Mammary epithelial cell (primary cell): ENCODE measurements at regions of chr17 and their contacts with region 1.

Region 1: DNA sequence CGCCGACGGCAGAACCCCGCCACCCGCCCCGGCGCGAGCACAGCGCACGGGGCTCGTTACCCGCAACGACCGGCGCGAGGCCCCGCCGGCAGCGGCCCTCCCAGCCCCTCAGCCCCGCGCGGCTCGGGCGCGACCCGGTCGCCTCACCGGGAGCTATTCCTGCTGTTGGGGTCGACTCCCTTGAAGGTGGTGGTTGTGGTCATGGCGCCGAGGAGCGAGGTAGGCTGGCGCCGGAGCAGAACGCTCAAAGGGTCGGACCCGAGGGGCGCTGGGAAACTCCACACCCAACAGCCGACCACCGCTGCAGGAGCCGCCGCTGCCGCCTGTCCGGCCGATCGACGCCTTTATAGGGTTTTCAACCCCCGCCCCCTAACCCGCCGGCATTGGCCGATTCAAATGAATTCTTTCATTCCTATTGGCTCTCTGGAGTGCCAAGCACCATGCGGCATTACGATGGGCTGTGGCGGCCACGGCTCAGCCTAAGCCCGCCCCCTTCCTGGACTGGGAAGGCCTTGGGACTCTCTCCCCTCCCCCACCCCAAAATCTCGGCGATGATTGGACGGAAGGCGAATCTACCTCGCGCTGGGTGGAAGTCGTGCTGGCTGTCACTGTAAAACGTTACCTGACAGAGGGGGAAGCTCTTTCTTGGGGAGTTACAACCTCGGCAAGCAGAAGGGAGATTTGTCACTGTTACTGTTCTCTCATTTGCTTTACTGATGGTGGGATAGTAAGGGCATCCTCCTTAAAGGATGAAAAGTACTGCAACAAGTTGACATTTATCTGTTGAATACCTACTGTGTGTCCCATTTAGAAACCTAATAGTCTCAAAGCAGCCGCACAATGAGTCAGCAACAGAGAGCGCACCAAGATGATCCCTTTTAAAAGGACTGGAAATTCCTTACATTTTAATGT is at the start of gene JPT1:
- DNase-seq: peak; percentile 99
- H3K4me3 ChIP-seq: peak within 1 kb of the TSS; percentile 92 to 94 (median 93)
- H3K27ac ChIP-seq: peak within 1 kb of the TSS; percentile 61
- H3K4me1 ChIP-seq: peaks cover 29% of the 10 kb centered on the region
- H3K27me3 ChIP-seq: no peaks in the 10 kb centered on the region
- CTCF ChIP-seq: no peak
- total RNA-seq, gene JPT1: 107 to 223 TPM

Region 2: DNA sequence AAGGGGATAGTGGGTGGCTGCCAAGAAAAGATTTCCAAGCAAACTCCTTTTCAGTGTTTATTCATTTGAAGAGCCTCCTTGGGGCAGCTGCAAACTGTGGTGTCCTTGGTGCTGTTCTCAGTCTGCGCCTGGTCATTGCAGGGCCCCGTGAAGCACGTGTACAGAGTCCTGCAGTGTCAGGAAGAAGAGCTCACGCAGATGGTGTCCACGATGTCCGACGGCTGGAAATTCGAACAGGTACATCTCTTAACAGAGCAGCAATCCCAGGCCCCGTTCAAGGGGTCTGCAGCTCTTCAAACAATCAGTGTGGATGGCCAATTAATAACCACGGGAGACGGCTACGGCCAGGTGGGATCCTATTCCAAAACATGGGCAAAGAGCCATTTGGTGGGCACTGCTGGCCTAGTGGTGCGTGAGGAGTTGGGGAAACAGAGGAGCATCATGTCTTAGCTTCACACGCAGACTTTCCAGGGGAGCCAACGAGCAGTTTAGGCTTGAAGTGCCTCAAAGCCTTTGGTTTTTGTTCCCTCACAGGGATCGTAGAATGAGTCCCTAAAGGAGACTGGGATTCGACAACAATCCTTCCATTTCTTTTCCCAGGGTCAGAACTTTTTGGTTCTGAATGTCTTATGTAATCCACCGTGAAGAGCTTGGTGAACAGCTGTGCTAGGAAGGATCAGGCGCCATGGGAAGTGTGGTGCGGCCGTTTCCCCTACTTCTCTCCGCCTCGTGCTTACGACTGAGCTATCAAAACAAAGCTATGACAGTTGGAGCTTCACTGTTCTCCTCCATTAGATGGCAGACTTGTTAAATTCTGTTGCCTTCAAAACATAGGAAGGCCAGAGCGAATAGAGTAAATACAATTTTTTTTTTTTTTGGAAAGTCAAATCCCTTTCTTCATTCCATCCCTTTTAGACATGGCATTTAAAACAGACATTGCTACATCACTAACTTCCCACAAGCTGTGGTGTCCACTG is 94.8 kb before region 1 on chr17:
- CTCF ChIA-PET with region 1: no interaction called
- dilution Hi-C with region 1: no loop called
- in situ Hi-C with region 1: no loop called
- intact Hi-C with region 1: no loop called
- DNase-seq: no peak
- H3K4me3 ChIP-seq: no peak overlapping the region
- H3K27ac ChIP-seq: no peak overlapping the region
- H3K4me1 ChIP-seq: no peaks in the 10 kb centered on the region
- H3K27me3 ChIP-seq: no peaks in the 10 kb centered on the region
- CTCF ChIP-seq: peak; percentile 13 to 31

Region 3: GRCh38 chr17:75124041-75124818 is 30.2 kb before region 1 on chr17:
- CTCF ChIA-PET with region 1: no interaction called
- dilution Hi-C with region 1: no loop called
- in situ Hi-C with region 1: no loop called
- intact Hi-C with region 1: loop called (anchors 2 kb)
- DNase-seq: peak; percentile 98
- H3K4me3 ChIP-seq: no peak overlapping the region
- H3K27ac ChIP-seq: peak overlapping the region; percentile 87
- H3K4me1 ChIP-seq: peaks cover 29% of the 10 kb centered on the region
- H3K27me3 ChIP-seq: no peaks in the 10 kb centered on the region
- CTCF ChIP-seq: peak in 1 of 2 donors; percentile 5

Region 4: DNA sequence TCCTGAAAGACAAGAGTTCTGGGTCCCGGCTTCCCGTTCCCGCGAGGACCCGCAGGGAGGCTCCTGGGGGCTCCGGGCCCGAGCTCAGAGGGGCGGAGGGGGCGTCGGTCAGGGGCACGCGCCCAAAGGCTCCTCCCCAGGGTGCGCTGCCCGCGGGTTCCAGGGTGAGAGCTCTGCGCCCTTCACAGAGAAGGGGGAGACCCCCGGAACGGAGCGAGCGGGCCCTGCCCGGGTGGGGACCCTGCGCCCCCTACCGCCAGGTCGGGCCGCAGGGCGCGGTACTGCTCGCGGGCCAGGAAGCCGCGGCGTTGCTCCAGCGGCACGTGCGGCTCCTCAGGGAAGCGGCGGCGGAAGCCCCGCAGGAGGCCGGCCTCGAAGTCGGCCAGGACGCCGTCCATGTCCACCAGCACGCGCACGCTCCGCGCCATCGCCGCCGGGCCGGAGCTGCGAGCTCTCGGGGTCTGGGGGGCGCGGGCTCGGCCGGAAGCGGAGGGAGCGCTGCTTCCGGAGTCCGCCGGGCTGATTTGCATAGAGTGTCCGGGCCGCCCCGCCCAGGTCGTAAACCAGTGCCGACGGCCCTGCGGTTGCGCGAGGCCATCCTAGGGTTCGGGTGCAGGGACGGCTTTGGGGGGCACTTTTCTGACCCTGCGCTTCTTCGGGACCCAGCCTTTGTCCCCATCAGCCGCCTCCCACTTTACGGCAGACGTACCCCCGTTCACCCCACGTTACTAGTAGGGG is 23.0 kb before region 1 on chr17 and contains the start of gene NT5C:
- CTCF ChIA-PET with region 1: no interaction called
- dilution Hi-C with region 1: no loop called
- in situ Hi-C with region 1: no loop called
- intact Hi-C with region 1: loop called (anchors 2 kb)
- DNase-seq: peak; percentile 69
- H3K4me3 ChIP-seq: peak within 1 kb of the TSS; percentile 72 to 97 (median 87)
- H3K27ac ChIP-seq: peak within 1 kb of the TSS; percentile 67
- H3K4me1 ChIP-seq: peaks cover 25% of the 10 kb centered on the region
- H3K27me3 ChIP-seq: no peaks in the 10 kb centered on the region
- CTCF ChIP-seq: peak; percentile 26 to 69
- total RNA-seq, gene NT5C: 45.7 to 65.7 TPM

Region 5: DNA sequence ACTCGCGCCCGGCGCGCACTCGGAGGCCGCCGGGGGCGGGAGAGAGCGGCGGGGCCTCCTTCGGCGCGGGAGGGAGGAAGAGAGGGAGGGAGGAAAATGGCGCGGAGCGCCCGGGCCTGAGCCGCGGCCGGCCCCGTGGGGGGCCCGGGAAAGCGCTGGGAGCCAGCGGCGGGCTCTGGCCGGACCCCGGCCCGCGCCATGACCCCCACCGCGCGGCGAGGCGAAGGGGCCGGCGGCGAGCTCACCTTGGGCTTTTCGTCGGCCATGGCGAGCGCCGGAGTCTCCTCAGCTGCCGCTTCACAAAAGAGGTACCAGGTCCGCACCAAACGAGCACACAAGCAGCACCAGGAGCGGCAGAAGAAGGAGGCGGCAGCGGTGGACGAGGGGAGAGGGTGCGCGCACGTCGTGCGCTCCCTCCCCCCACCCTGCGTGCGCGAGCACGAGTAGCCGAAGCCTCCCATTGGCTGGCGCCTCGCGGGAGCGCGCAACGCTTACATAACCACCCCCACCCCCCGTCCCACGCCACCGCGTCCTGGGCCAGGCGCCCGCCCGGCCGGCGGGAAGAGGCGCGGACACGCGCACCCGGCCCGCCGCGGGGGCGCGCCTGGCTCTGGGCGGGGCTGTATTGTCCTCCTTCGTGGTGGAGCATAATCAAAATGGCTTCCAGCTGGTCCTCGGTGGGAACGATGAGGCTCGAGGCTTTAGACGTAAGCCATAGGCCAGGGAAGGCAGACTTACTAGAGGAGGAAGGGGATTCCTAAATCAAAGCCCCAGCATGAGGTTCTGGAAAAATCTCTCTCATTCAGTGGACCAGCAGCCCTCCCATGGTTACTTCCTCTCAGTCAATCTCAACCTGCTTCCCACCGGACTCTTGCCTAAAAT is 28.4 kb after region 1 on chr17 and contains the start of gene SUMO2:
- CTCF ChIA-PET with region 1: no interaction called
- dilution Hi-C with region 1: no loop called
- in situ Hi-C with region 1: no loop called
- intact Hi-C with region 1: loop called (anchors 2 kb)
- DNase-seq: peak; percentile 92
- H3K4me3 ChIP-seq: peak within 1 kb of the TSS; percentile 59 to 97 (median 76)
- H3K27ac ChIP-seq: peak within 1 kb of the TSS; percentile 83
- H3K4me1 ChIP-seq: peaks cover 10% of the 10 kb centered on the region
- H3K27me3 ChIP-seq: no peaks in the 10 kb centered on the region
- CTCF ChIP-seq: peak in 1 of 2 donors; percentile 45
- total RNA-seq, gene SUMO2: 49.7 to 279 TPM